Naive thymus-derived CD4-positive, alpha-beta T cell (primary cell): ENCODE measurements at regions of chr15 and their contacts with region 1.

Region 1: GRCh38 chr15:64893481-64894394 is 18.0 kb upstream of the ANKDD1A start:
- DNase-seq: peak; percentile 78 to 97 (median 94)
- ATAC-seq: peak; percentile 82
- H3K4me3 ChIP-seq: peak overlapping the region; percentile 74
- H3K4me3 Mint-ChIP-seq: peak overlapping the region; percentile 77 to 94 (median 90)
- H3K27ac ChIP-seq: peak overlapping the region; percentile 84
- H3K27ac Mint-ChIP-seq: peak overlapping the region; percentile 90 to 100 (median 98)
- H3K4me1 ChIP-seq: peaks cover 52 to 53% of the 10 kb centered on the region in 2 donors
- H3K4me1 Mint-ChIP-seq: peaks cover 41 to 76% (median 63%) of the 10 kb centered on the region in 7 donors
- H3K27me3 ChIP-seq: no peaks in the 10 kb centered on the region
- H3K27me3 Mint-ChIP-seq: no peaks in the 10 kb centered on the region

Region 2: GRCh38 chr15:64162870-64163658 is 730.7 kb before region 1 on chr15 and contains the start of gene PPIB:
- CTCF ChIA-PET with region 1: no interaction called
- POLR2A ChIA-PET with region 1: no interaction called
- intact Hi-C with region 1: loop called in 1 of 2 experiments (anchors 1 kb)
- DNase-seq: peak; percentile 89 to 98 (median 96)
- ATAC-seq: peak; percentile 97
- H3K4me3 ChIP-seq: peak within 1 kb of the TSS; percentile 76
- H3K4me3 Mint-ChIP-seq: peak within 1 kb of the TSS; percentile 80 to 97 (median 90)
- H3K27ac ChIP-seq: peak within 1 kb of the TSS; percentile 97
- H3K27ac Mint-ChIP-seq: peak within 1 kb of the TSS; percentile 83 to 97 (median 93)
- H3K4me1 ChIP-seq: peaks cover 17 to 29% of the 10 kb centered on the region in 2 donors
- H3K4me1 Mint-ChIP-seq: peaks cover 30 to 51% (median 46%) of the 10 kb centered on the region in 7 donors
- H3K27me3 ChIP-seq: no peaks in the 10 kb centered on the region
- H3K27me3 Mint-ChIP-seq: peaks cover 0 to 2% (median 0%) of the 10 kb centered on the region in 5 donors
- total RNA-seq, gene PPIB: 160 to 530 (median 184) TPM

Region 3: GRCh38 chr15:64702816-64703646 is 190.7 kb before region 1 on chr15:
- CTCF ChIA-PET with region 1: no interaction called
- POLR2A ChIA-PET with region 1: no interaction called
- intact Hi-C with region 1: loop called in 1 of 2 experiments (anchors 1 kb)
- DNase-seq: peak; percentile 87 to 98 (median 92)
- ATAC-seq: peak; percentile 98
- H3K4me3 ChIP-seq: peak overlapping the region; percentile 93
- H3K4me3 Mint-ChIP-seq: peak overlapping the region; percentile 78 to 97 (median 84)
- H3K27ac ChIP-seq: peak overlapping the region; percentile 80
- H3K27ac Mint-ChIP-seq: peak overlapping the region; percentile 67 to 95 (median 91)
- H3K4me1 ChIP-seq: peaks cover 40 to 43% of the 10 kb centered on the region in 2 donors
- H3K4me1 Mint-ChIP-seq: peaks cover 46 to 57% (median 52%) of the 10 kb centered on the region in 7 donors
- H3K27me3 ChIP-seq: no peaks in the 10 kb centered on the region
- H3K27me3 Mint-ChIP-seq: no peaks in the 10 kb centered on the region

Region 4: GRCh38 chr15:64825431-64826294 is 68.1 kb before region 1 on chr15 and contains the start of gene PIF1:
- CTCF ChIA-PET with region 1: no interaction called
- POLR2A ChIA-PET with region 1: interaction called, 17 read pairs
- intact Hi-C with region 1: loop called (anchors 1 kb)
- DNase-seq: peak; percentile 44 to 92 (median 87)
- ATAC-seq: peak; percentile 99
- H3K4me3 ChIP-seq: peak within 1 kb of the TSS; percentile 71
- H3K4me3 Mint-ChIP-seq: peak within 1 kb of the TSS; percentile 82 to 95 (median 88)
- H3K27ac ChIP-seq: peak within 1 kb of the TSS; percentile 37
- H3K27ac Mint-ChIP-seq: peak within 1 kb of the TSS in 8 of 9 donors; percentile 41 to 91 (median 75)
- H3K4me1 ChIP-seq: peaks cover 21 to 24% of the 10 kb centered on the region in 2 donors
- H3K4me1 Mint-ChIP-seq: peaks cover 25 to 42% (median 35%) of the 10 kb centered on the region in 7 donors
- H3K27me3 ChIP-seq: peaks cover 0 to 4% of the 10 kb centered on the region in 2 donors
- H3K27me3 Mint-ChIP-seq: peaks cover 0 to 19% (median 12%) of the 10 kb centered on the region in 5 donors
- total RNA-seq, gene PIF1: 0.34 to 30.2 (median 1.0) TPM in 3 of 5 experiments, not detected in the others

Region 5: DNA sequence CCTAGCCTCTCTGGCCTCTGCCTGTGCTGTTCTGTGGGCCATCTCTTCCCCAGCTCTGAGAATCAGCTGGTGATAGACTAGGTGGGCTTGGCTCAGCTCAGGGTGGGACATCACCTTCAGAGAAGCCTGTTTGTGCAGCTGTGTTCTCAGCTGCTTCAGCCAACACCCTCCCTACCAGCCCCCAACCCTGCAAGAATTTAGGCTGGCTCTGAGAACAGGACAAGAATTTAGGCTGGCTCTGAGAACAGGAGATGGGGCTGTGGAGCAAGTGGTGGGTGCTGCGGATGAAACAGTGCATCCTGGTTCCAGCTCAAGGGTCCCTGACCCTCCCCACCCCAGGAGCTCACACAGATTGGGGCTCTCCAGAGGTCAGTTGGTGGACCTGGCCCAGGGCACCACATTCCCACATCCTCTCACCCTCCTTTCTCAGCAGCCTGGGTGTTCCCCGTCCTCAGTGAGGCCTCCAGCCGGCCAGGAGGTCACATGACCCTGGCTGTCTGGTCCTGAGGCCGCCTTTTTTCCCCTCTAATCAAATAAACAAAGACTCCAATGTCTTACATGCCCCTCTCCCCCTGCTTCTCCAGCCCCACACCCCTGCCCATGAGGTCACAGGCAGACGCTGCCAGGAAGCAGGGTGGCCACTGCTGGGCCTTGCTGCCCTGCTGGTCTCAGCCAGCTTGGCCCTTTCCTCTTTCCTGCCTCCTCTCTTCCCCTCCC is 37.2 kb before region 1 on chr15:
- CTCF ChIA-PET with region 1: no interaction called
- POLR2A ChIA-PET with region 1: interaction called, 11 read pairs
- intact Hi-C with region 1: no loop called
- DNase-seq: no peak
- ATAC-seq: peak; percentile 19
- H3K4me3 ChIP-seq: no peak overlapping the region
- H3K4me3 Mint-ChIP-seq: peak overlapping the region in 4 of 10 donors; percentile 12 to 48 (median 20)
- H3K27ac ChIP-seq: peak overlapping the region; percentile 17
- H3K27ac Mint-ChIP-seq: peak overlapping the region in 8 of 9 donors; percentile 26 to 91 (median 66)
- H3K4me1 ChIP-seq: peaks cover 8 to 27% of the 10 kb centered on the region in 2 donors
- H3K4me1 Mint-ChIP-seq: peaks cover 38 to 60% (median 56%) of the 10 kb centered on the region in 7 donors
- H3K27me3 ChIP-seq: no peaks in the 10 kb centered on the region
- H3K27me3 Mint-ChIP-seq: no peaks in the 10 kb centered on the region

Region 6: DNA sequence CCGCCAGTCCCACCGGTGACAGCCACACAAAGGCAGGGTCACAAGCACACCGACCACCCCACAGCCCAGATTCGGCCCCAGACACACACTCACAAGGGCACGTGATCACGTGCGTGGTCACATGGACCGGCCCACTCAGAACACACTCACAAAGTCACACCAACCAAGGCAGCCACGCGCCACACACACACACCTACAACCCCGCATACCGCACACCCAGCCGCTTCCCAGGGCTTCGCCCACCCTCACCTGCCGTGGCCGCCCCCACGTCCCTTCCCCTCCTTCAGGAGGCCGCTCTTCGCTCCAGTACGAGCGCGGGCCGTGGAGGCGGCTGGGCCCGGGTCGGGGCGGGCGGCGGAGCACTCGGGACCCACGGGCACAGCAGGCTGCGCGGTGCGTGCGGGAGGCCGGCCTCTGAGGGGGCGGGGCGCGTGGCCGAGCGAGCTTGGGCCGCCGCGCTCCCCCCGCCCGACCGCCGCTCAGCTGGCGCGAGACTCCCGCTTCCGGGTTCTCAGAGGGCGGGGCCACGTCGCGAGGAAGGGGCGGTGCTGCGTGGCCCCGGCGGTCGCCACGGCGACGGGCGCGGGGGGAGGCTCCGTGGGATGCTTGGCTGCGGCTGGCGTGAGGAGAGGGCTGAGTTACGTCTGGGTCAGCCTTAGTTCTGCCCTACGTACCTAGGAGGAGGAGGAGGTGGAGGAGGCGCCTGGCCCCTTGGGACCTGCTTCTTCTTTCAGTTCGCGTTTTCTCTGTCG is 95.9 kb after region 1 on chr15 and contains the start of gene SPG21:
- CTCF ChIA-PET with region 1: no interaction called
- POLR2A ChIA-PET with region 1: interaction called, 3 read pairs
- intact Hi-C with region 1: loop called (anchors 2 kb)
- DNase-seq: peak; percentile 77 to 97 (median 85)
- ATAC-seq: peak; percentile 95
- H3K4me3 ChIP-seq: peak within 1 kb of the TSS; percentile 83
- H3K4me3 Mint-ChIP-seq: peak within 1 kb of the TSS; percentile 93 to 99 (median 97)
- H3K27ac ChIP-seq: peak within 1 kb of the TSS; percentile 76
- H3K27ac Mint-ChIP-seq: peak within 1 kb of the TSS; percentile 91 to 98 (median 94)
- H3K4me1 ChIP-seq: peaks cover 0 to 19% of the 10 kb centered on the region in 2 donors
- H3K4me1 Mint-ChIP-seq: peaks cover 33 to 55% (median 48%) of the 10 kb centered on the region in 7 donors
- H3K27me3 ChIP-seq: no peaks in the 10 kb centered on the region
- H3K27me3 Mint-ChIP-seq: no peaks in the 10 kb centered on the region
- total RNA-seq, gene SPG21: 42.5 to 72.3 (median 60.0) TPM

Region 7: DNA sequence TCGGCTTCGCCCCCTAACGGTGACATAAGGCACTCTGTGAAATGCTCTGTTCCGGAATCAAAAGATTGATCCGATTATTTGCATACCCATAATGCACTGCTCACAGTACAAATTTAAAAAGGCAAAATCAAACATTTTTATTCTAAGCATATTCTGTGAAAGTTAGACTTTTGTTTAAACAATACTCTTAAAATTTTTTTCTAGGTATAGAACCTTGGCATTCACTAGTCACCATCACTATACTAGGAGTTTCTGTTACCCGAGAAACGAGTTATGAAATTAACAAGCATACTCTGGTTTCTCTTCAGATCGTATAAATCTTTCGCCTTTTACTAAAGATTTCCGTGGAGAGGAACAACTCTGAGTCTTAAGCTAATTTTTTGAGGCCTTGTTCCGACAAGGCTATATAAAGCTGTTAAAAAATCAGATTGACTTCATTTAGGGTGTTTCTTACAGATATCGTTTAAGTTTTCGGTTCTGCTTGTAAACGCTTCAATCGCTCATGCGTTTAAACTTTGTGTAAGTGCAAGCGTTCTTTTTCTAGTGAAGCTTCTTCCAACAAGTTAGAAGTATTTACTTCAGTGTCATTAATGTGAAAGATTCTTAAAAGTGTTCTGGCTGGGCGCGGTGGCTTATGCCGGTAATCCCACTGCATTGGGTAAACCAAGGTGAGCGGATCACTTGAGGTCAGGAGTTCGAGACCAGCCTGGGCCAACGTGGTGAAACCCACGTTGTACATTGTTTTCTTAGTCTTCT is 410.8 kb after region 1 on chr15 and contains the start of gene RNU5B-1:
- CTCF ChIA-PET with region 1: no interaction called
- POLR2A ChIA-PET with region 1: interaction called, 7 read pairs
- intact Hi-C with region 1: loop called (anchors 1 to 5 kb)
- DNase-seq: peak; percentile 40 to 94 (median 88)
- ATAC-seq: peak; percentile 89
- H3K4me3 ChIP-seq: peak within 1 kb of the TSS; percentile 60
- H3K4me3 Mint-ChIP-seq: peak within 1 kb of the TSS; percentile 91 to 99 (median 97)
- H3K27ac ChIP-seq: peak within 1 kb of the TSS; percentile 83
- H3K27ac Mint-ChIP-seq: peak within 1 kb of the TSS; percentile 96 to 100 (median 99)
- H3K4me1 ChIP-seq: peaks cover 0 to 9% of the 10 kb centered on the region in 2 donors
- H3K4me1 Mint-ChIP-seq: peaks cover 4 to 35% (median 31%) of the 10 kb centered on the region in 7 donors
- H3K27me3 ChIP-seq: no peaks in the 10 kb centered on the region
- H3K27me3 Mint-ChIP-seq: peaks cover 0 to 11% (median 0%) of the 10 kb centered on the region in 5 donors
- total RNA-seq, gene RNU5B-1: 18.9 TPM in 1 of 5 experiments, not detected in the others